HepG2 (cell line): ENCODE measurements at regions of chr21 and their contacts with region 1.

Region 1: GRCh38 chr21:44510508-44511210 is 29.3 kb downstream of the KRTAP10-1 start:
- DNase-seq: peak; percentile 57
- ATAC-seq: peak; percentile 47
- H3K4me3 ChIP-seq: peak overlapping the region in 1 of 3 experiments; percentile 23; a peak in 1 of 6 replicates
- H3K27ac ChIP-seq: peak overlapping the region; percentile 45
- H3K4me1 ChIP-seq: peaks cover 63% of the 10 kb centered on the region
- H3K27me3 ChIP-seq: no peaks in the 10 kb centered on the region; a peak in 1 of 5 replicates
- CTCF ChIP-seq: peak; percentile 98
- EP300 ChIP-seq: no peak
- POLR2A ChIP-seq: no peak
- RAD21 ChIP-seq: peak; percentile 95

Region 2: GRCh38 chr21:44742418-44743153 is 231.9 kb after region 1 on chr21:
- CTCF ChIA-PET with region 1: no interaction called
- POLR2A ChIA-PET with region 1: interaction called, 3 read pairs
- in situ Hi-C with region 1: loop called (anchors 5 kb)
- intact Hi-C with region 1: loop called (anchors 5 kb)
- DNase-seq: peak; percentile 30
- ATAC-seq: no peak
- H3K4me3 ChIP-seq: no peak overlapping the region
- H3K27ac ChIP-seq: no peak overlapping the region
- H3K4me1 ChIP-seq: no peaks in the 10 kb centered on the region
- H3K27me3 ChIP-seq: peaks cover 3 to 12% of the 10 kb centered on the region in 2 experiments; a peak in 4 of 5 replicates
- CTCF ChIP-seq: peak; percentile 60
- EP300 ChIP-seq: no peak
- POLR2A ChIP-seq: no peak
- RAD21 ChIP-seq: peak; percentile 17; the same call in 1 of the 2 replicates